A673 (cell line): ENCODE measurements at regions of chr1 and their contacts with region 1.

Region 1: DNA sequence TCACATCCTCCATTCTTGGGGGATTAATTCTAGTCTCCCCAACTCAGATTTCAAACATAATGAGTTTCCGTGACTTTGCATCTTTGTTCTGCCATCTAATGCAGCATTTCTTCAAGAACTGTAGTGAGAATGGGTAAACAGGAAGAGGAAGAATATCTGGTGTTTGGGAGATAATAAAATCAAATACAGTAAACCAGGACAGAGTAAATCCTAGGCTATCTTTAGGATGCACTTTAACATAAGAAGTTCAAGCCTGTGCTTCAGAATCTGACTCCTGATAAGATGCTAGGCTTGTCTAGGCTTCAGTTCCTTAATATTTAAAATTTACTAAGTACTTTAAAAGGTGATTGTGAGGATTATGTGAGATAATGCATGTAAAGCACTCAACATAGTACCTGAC is 27.9 kb downstream of the PATJ start:
- DNase-seq: no peak
- H3K4me3 ChIP-seq: no peak overlapping the region
- H3K27ac ChIP-seq: no peak overlapping the region
- H3K4me1 ChIP-seq: no peaks in the 10 kb centered on the region
- H3K27me3 ChIP-seq: no peaks in the 10 kb centered on the region
- CTCF ChIP-seq: no peak

Region 2: GRCh38 chr1:61781151-61781550 is 11.0 kb after region 1 on chr1:
- CTCF ChIA-PET with region 1: no interaction called
- POLR2A ChIA-PET with region 1: interaction called, 12 read pairs
- intact Hi-C with region 1: no loop called
- DNase-seq: no peak
- H3K4me3 ChIP-seq: no peak overlapping the region
- H3K27ac ChIP-seq: no peak overlapping the region
- H3K4me1 ChIP-seq: no peaks in the 10 kb centered on the region
- H3K27me3 ChIP-seq: no peaks in the 10 kb centered on the region
- CTCF ChIP-seq: no peak

Region 3: GRCh38 chr1:62050165-62050564 is 280.0 kb after region 1 on chr1:
- CTCF ChIA-PET with region 1: no interaction called
- POLR2A ChIA-PET with region 1: no interaction called
- intact Hi-C with region 1: no loop called
- DNase-seq: no peak
- H3K4me3 ChIP-seq: no peak overlapping the region
- H3K27ac ChIP-seq: no peak overlapping the region
- H3K4me1 ChIP-seq: peaks cover 6% of the 10 kb centered on the region
- H3K27me3 ChIP-seq: no peaks in the 10 kb centered on the region
- CTCF ChIP-seq: no peak